Heart right ventricle (tissue), 16 donors: ENCODE measurements at regions of chr5 and their contacts with region 1.

Region 1: GRCh38 chr5:171595801-171596231 is 176.4 kb downstream of the FGF18 start:
- DNase-seq: no peak
- ATAC-seq: peak in 1 of 8 donors; percentile 65
- H3K4me3 ChIP-seq: no peak overlapping the region
- H3K27ac ChIP-seq: peak overlapping the region in 6 of 10 donors; percentile 40 to 61 (median 49)
- H3K4me1 ChIP-seq: peaks cover 0 to 19% (median 11%) of the 10 kb centered on the region in 9 donors
- H3K27me3 ChIP-seq: no peaks in the 10 kb centered on the region
- CTCF ChIP-seq: no peak

Region 2: GRCh38 chr5:171484460-171484899 is 111.3 kb before region 1 on chr5:
- intact Hi-C with region 1: loop called in 1 of 10 experiments (anchors 10 kb)
- DNase-seq: no peak
- ATAC-seq: peak in 6 of 8 donors; percentile 27 to 54 (median 41)
- H3K4me3 ChIP-seq: no peak overlapping the region
- H3K27ac ChIP-seq: peak overlapping the region in 3 of 10 donors; percentile 62 to 78 (median 69)
- H3K4me1 ChIP-seq: peaks cover 0 to 16% (median 9%) of the 10 kb centered on the region in 9 donors
- H3K27me3 ChIP-seq: no peaks in the 10 kb centered on the region
- CTCF ChIP-seq: peak; percentile 46 to 79 (median 69)

Region 3: DNA sequence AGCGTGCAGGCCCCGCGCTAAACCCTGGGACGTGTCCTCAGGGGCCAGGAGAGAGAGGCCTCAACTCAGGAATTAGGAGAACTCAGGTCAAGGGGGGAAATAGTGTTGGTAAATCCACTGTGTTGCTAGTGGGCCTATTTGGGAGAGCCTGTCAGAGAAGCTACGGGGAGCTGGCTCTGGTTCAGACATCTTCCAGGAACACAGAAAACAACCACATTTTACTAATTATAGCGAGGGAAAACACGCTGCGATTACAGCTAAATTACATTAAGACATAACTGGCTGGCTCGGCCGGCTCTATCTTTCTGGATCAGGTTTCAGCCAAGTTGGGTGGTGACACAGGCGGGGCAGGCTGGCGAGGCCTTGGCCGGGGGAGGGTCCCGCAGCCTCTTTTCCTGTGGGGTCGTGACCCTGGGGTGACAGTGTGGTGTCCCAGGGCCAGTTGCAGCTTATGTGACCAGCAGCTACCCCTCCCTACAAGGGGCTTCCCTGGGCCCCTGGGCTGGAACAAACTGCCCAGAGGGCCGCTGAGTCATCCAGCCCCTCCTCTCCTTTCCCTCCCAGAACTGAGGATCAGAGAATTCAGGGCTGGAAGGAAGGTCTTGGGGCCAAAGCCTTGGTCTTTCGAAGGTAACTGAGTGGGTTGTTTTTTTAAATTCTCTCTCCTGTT is 101.2 kb before region 1 on chr5:
- intact Hi-C with region 1: loop called in 2 of 10 experiments (anchors 5 to 10 kb)
- DNase-seq: peak; percentile 66 to 71
- ATAC-seq: peak; percentile 82 to 92 (median 88)
- H3K4me3 ChIP-seq: peak overlapping the region in 2 of 10 donors; percentile 3 to 18
- H3K27ac ChIP-seq: peak overlapping the region; percentile 41 to 94 (median 84)
- H3K4me1 ChIP-seq: peaks cover 6 to 45% (median 27%) of the 10 kb centered on the region in 9 donors
- H3K27me3 ChIP-seq: no peaks in the 10 kb centered on the region
- CTCF ChIP-seq: no peak

Region 4: GRCh38 chr5:171610694-171611093 is 14.9 kb after region 1 on chr5:
- intact Hi-C with region 1: loop called in 1 of 10 experiments (anchors 1 kb)
- DNase-seq: no peak
- ATAC-seq: no peak
- H3K4me3 ChIP-seq: no peak overlapping the region
- H3K27ac ChIP-seq: no peak overlapping the region
- H3K4me1 ChIP-seq: peaks cover 0 to 8% (median 0%) of the 10 kb centered on the region in 9 donors
- H3K27me3 ChIP-seq: peaks cover 0 to 10% (median 0%) of the 10 kb centered on the region in 7 donors
- CTCF ChIP-seq: no peak